ENCODE measurements at regions of chr9 and their contacts with region 1.

Region 1: GRCh38 chr9:111891910-111892499 is 4.6 kb upstream of the UGCG start:
- DNase-seq: no peak
- H3K4me3 ChIP-seq: no peak overlapping the region
- H3K27ac ChIP-seq: peak overlapping the region in 2 of 4 donors; percentile 45 to 58
- H3K4me1 ChIP-seq: peaks cover 0 to 29% (median 11%) of the 10 kb centered on the region in 3 donors
- H3K27me3 ChIP-seq: no peaks in the 10 kb centered on the region
- CTCF ChIP-seq: no peak
- POLR2A ChIP-seq: no peak

Region 2: DNA sequence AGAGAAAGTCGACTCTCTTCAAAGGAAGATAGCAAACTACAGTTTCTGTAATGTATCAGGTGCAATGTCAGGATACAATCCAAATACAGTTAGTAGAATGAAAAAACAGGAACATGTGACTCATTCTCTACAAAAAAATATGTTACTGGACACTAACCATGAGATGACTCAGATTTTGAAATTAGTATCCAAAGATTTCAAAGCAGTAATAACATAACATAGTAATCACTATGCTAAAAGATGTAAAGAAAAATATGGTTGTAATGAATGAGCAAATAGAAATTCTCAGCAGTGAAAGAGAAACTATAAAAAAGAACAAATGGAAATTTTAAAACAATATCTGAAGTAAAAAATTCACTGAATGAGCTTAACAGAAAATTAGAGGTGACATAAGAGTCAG is 139.6 kb before region 1 on chr9:
- intact Hi-C with region 1: no loop called
- DNase-seq: no peak
- H3K4me3 ChIP-seq: no peak overlapping the region
- H3K27ac ChIP-seq: no peak overlapping the region
- H3K4me1 ChIP-seq: no peaks in the 10 kb centered on the region
- H3K27me3 ChIP-seq: no peaks in the 10 kb centered on the region
- CTCF ChIP-seq: no peak
- POLR2A ChIP-seq: no peak

Region 3: GRCh38 chr9:112074250-112075008 is 182.4 kb after region 1 on chr9:
- intact Hi-C with region 1: loop called (anchors 5 kb)
- DNase-seq: no peak
- H3K4me3 ChIP-seq: no peak overlapping the region
- H3K27ac ChIP-seq: peak overlapping the region; percentile 17 to 72 (median 59)
- H3K4me1 ChIP-seq: peaks cover 3 to 50% (median 15%) of the 10 kb centered on the region in 3 donors
- H3K27me3 ChIP-seq: no peaks in the 10 kb centered on the region
- CTCF ChIP-seq: peak; percentile 53 to 98 (median 92)
- POLR2A ChIP-seq: no peak